ENCODE measurements at regions of chr2 and their contacts with region 1.

Region 1: DNA sequence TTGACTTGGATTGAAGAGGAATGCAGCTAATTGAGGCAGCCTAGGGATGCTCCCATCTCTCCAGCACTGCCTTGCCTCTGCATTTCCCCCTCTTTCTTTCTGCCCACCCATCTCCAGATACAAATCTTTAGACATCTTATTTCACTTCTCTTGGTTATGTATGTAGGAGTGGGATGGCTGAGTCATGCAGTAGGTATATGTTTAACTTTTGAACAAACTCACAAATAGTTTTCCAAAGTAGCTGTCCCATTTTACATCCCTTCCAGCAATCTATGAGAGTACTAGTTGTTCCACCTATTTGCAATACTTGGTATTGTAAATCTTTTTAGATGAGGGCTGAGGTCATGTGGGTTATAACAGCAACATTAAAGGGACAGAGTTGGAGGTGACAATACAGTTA is 329.9 kb downstream of the DYSF start:
- DNase-seq: no peak
- ATAC-seq: no peak

Region 2: DNA sequence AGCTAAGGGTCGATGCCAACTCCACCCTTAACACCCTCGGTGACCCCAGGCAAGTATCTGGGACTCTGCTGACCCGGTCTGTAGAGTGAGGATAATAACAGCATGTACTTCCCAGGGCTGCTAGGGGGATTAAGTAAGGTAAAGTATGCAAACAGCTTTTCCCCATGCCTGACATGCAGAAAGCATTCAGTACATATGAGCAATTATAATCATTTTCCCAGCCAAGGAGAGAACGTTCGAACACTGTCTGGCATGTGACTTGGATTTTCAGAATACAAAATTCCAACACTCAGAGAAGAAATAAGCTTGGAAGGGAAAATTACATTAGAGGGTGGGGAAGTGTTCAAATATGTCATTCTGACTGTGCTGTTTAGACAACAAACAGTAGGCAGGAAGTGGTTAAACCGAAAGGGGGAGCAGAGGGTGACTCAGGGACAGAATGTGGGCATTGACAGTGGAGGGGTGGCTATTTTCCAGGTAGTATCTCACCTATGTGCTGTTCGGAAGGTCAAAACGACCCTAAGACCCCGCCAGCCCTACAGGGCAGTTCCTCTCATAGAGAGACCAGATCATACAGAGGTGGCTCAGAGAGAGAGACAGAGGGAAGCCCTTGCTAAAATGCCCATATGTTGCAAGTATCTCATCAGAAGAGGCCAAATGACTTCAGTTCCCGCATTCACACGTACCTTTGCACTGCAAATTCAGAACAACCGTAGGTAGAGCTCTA is 1836.7 kb before region 1 on chr2:
- intact Hi-C with region 1: no loop called
- DNase-seq: no peak
- ATAC-seq: peak; percentile 28 to 45

Region 3: DNA sequence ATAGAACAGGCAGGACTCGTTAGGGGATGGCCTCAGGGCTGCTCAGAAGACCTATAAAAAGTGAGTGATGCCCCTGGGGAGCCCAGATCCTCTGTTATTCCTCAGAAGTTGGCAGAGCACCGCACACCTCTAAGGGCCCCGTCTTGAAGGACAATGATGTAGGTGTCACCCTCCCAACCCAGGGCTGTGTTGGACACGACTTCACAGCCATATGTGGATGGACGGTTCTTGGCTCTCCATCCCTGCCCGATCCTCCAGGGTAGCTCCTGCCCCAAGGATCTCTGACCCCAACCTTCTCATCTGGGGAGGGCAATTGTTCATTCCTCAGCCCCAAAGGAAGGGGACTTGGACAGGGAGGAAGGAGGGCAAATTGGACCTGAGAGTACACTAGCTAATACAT is 83.8 kb before region 1 on chr2:
- intact Hi-C with region 1: loop called in 1 of 2 experiments (anchors 1 kb)
- DNase-seq: no peak
- ATAC-seq: no peak